ENCODE measurements at regions of chrX and their contacts with region 1.

Region 1: GRCh38 chrX:15366506-15367352 is 17.5 kb downstream of the VEGFD start:
- DNase-seq: no peak
- ATAC-seq: peak in 2 of 4 donors; percentile 23 to 35
- H3K4me3 ChIP-seq: no peak overlapping the region
- H3K27ac ChIP-seq: no peak overlapping the region
- H3K4me1 ChIP-seq: no peaks in the 10 kb centered on the region
- H3K27me3 ChIP-seq: no peaks in the 10 kb centered on the region
- CTCF ChIP-seq: no peak
- POLR2A ChIP-seq: no peak

Region 2: GRCh38 chrX:15451938-15452337 is 85.2 kb after region 1 on chrX:
- intact Hi-C with region 1: loop called in 1 of 2 experiments (anchors 10 kb)
- DNase-seq: no peak
- ATAC-seq: no peak
- H3K4me3 ChIP-seq: no peak overlapping the region
- H3K27ac ChIP-seq: no peak overlapping the region
- H3K4me1 ChIP-seq: no peaks in the 10 kb centered on the region
- H3K27me3 ChIP-seq: no peaks in the 10 kb centered on the region
- CTCF ChIP-seq: no peak
- POLR2A ChIP-seq: no peak